Natural killer cell (primary cell): ENCODE measurements at regions of chr4 and their contacts with region 1.

Region 1: GRCh38 chr4:148056869-148057268 is 325.0 kb downstream of the ARHGAP10 start:
- DNase-seq: peak; percentile 41 to 74
- ATAC-seq: peak; percentile 77 to 85 (median 78)
- H3K4me3 ChIP-seq: no peak overlapping the region
- H3K4me3 Mint-ChIP-seq: peak overlapping the region; percentile 49
- H3K27ac ChIP-seq: peak overlapping the region; percentile 9
- H3K27ac Mint-ChIP-seq: peak overlapping the region; percentile 68 to 74
- H3K4me1 ChIP-seq: peaks cover 72% of the 10 kb centered on the region
- H3K4me1 Mint-ChIP-seq: peaks cover 80 to 85% of the 10 kb centered on the region in 2 donors
- H3K27me3 ChIP-seq: no peaks in the 10 kb centered on the region
- H3K27me3 Mint-ChIP-seq: no peaks in the 10 kb centered on the region
- CTCF ChIP-seq: peak; percentile 43

Region 2: GRCh38 chr4:148441986-148442831 is 385.3 kb after region 1 on chr4 and contains the start of gene NR3C2:
- intact Hi-C with region 1: loop called (anchors 10 kb)
- DNase-seq: peak; percentile 93 to 99
- ATAC-seq: peak; percentile 81 to 95 (median 89)
- H3K4me3 ChIP-seq: peak within 1 kb of the TSS; percentile 90
- H3K4me3 Mint-ChIP-seq: peak within 1 kb of the TSS; percentile 97
- H3K27ac ChIP-seq: peak within 1 kb of the TSS; percentile 89
- H3K27ac Mint-ChIP-seq: peak within 1 kb of the TSS; percentile 93 to 95
- H3K4me1 ChIP-seq: peaks cover 29% of the 10 kb centered on the region
- H3K4me1 Mint-ChIP-seq: peaks cover 28 to 29% of the 10 kb centered on the region in 2 donors
- H3K27me3 ChIP-seq: peaks cover 9% of the 10 kb centered on the region
- H3K27me3 Mint-ChIP-seq: peaks cover 21 to 38% of the 10 kb centered on the region in 2 donors
- CTCF ChIP-seq: no peak
- total RNA-seq, gene NR3C2: 4.2 to 8.6 (median 6.3) TPM